B cell (primary cell): ENCODE measurements at regions of chr13 and their contacts with region 1.

Region 1: DNA sequence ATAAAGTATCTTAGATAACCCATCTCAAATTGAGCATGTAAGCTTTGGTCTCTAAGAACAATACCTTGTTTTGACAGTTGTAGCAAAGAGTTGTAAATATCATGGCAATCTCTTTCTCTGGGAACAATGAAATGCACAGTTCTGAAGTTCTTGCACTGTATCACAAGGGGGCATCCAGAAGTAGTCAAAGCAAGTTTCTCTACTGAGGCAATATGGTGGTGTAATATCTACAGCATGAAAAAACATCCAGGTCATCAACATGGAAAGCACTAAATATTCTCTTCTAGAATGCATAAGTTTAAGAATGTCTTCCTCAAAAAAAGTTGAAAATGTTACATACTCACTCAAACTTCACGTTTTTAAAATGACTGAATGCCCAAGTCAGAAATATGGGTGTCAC is 19.6 kb downstream of the MTMR6 start:
- DNase-seq: peak; percentile 38
- ATAC-seq: peak; percentile 63
- H3K4me3 ChIP-seq: no peak overlapping the region
- H3K4me3 Mint-ChIP-seq: no peak overlapping the region
- H3K27ac ChIP-seq: no peak overlapping the region
- H3K27ac Mint-ChIP-seq: peak overlapping the region; percentile 43
- H3K4me1 ChIP-seq: no peaks in the 10 kb centered on the region
- H3K4me1 Mint-ChIP-seq: peaks cover 4% of the 10 kb centered on the region
- H3K27me3 ChIP-seq: no peaks in the 10 kb centered on the region
- H3K27me3 Mint-ChIP-seq: no peaks in the 10 kb centered on the region
- CTCF ChIP-seq: no peak

Region 2: DNA sequence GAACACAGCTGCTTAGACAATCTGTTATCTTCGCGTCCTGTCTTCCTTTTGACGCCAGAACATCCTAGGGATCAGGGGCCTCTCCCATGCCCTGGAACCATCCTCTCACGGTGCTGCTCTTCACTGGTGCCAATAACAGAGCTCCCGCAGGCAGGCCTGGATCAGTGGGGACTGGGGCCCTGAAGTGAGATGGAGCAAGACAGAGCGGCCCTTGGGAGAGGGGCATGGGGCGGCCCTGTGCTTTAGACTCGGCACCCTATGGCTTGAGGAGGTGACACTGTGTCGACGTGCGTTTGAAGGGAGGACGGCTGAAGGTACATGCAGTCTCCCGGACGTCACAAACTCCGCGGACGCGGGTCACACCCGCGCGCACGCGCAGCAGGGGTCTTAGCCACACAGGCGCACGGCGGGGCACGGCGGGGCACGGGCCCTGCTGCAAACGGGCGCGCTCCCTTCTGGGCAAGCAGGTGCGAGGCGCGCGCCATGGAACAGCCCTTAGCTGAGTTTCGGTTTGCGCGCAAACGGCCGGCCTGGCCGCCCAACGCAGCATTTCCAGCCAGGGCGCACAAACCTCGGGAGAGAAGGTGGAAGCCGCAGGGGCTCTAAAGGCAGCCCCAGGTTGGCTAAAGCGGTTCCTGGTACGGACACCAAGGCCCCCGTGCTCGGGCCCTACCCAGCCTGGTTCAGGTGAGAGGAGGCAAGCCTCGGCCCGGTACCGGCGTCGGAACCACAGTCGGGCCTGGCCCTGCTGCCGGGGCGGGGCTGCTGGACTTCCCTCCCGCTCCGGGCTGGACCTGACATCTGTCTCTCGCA is 520.3 kb before region 1 on chr13:
- CTCF ChIA-PET with region 1: no interaction called
- POLR2A ChIA-PET with region 1: no interaction called
- intact Hi-C with region 1: no loop called
- DNase-seq: peak; percentile 19
- ATAC-seq: no peak
- H3K4me3 ChIP-seq: no peak overlapping the region
- H3K4me3 Mint-ChIP-seq: peak overlapping the region; percentile 73
- H3K27ac ChIP-seq: no peak overlapping the region
- H3K27ac Mint-ChIP-seq: no peak overlapping the region
- H3K4me1 ChIP-seq: peaks cover 12 to 14% of the 10 kb centered on the region in 2 donors
- H3K4me1 Mint-ChIP-seq: peaks cover 19% of the 10 kb centered on the region
- H3K27me3 ChIP-seq: peaks cover 0 to 21% (median 8%) of the 10 kb centered on the region in 4 experiments
- H3K27me3 Mint-ChIP-seq: peaks cover 59% of the 10 kb centered on the region
- CTCF ChIP-seq: no peak

Region 3: DNA sequence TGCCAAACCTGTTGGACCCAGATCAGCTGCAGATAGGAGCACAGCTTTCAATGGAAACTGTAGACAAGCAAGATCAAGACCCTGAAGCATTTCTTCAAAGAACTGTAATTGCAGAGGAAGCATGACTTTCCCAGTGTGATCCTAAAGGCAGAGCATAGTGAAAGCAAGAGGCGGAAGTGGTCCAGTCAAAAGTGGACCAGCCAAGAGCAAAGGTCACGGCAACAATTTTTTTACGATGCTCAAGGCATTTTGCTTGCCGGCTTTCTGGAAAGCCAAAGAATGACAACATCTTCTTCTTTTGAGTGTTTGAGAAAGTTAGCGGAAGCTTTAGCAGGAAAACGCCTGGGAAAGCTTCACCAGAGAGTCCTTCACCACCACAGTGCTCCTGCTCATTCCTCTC is 392.2 kb before region 1 on chr13:
- CTCF ChIA-PET with region 1: no interaction called
- POLR2A ChIA-PET with region 1: interaction called, 11 read pairs
- intact Hi-C with region 1: no loop called
- DNase-seq: no peak
- ATAC-seq: no peak
- H3K4me3 ChIP-seq: no peak overlapping the region
- H3K4me3 Mint-ChIP-seq: no peak overlapping the region
- H3K27ac ChIP-seq: no peak overlapping the region
- H3K27ac Mint-ChIP-seq: no peak overlapping the region
- H3K4me1 ChIP-seq: no peaks in the 10 kb centered on the region
- H3K4me1 Mint-ChIP-seq: no peaks in the 10 kb centered on the region
- H3K27me3 ChIP-seq: peaks cover 0 to 4% (median 0%) of the 10 kb centered on the region in 4 experiments
- H3K27me3 Mint-ChIP-seq: peaks cover 30% of the 10 kb centered on the region
- CTCF ChIP-seq: no peak

Region 4: GRCh38 chr13:25253687-25254086 is 14.0 kb before region 1 on chr13:
- CTCF ChIA-PET with region 1: no interaction called
- POLR2A ChIA-PET with region 1: no interaction called
- intact Hi-C with region 1: no loop called
- DNase-seq: no peak
- ATAC-seq: no peak
- H3K4me3 ChIP-seq: no peak overlapping the region
- H3K4me3 Mint-ChIP-seq: no peak overlapping the region
- H3K27ac ChIP-seq: no peak overlapping the region
- H3K27ac Mint-ChIP-seq: no peak overlapping the region
- H3K4me1 ChIP-seq: peaks cover 0 to 4% of the 10 kb centered on the region in 2 donors
- H3K4me1 Mint-ChIP-seq: peaks cover 3% of the 10 kb centered on the region
- H3K27me3 ChIP-seq: no peaks in the 10 kb centered on the region
- H3K27me3 Mint-ChIP-seq: no peaks in the 10 kb centered on the region
- CTCF ChIP-seq: no peak

Region 5: DNA sequence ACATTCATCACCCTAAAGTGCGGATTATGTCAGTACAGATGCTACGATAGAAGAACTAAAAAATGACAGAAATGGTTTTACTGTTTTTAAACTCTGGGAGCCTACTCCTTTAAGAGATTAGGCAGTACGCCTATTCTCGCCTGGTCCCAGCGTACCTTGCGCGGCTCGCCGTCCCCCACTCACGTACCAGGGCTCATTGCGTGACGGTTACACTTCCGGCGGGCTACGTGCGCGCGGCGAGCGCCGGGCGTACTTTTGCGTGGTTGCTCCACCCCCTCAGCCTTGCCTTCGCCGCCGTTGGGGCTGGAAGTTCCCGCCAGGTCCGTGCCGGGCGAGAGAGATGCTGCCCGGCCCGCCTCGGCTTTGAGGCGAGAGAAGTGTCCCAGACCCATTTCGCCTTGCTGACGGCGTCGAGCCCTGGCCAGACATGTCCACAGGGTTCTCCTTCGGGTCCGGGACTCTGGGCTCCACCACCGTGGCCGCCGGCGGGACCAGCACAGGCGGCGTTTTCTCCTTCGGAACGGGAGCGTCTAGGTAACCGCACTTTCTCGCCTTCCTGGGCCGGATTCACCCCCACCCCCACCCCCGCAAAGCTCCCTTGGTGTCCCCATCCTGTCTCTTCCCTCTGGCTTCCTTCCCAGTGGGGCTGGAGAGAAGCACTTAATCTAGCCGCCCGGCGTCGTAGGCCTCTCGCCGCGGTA is 33.8 kb after region 1 on chr13 and contains the start of gene NUP58:
- CTCF ChIA-PET with region 1: interaction called, 3 read pairs
- POLR2A ChIA-PET with region 1: no interaction called
- intact Hi-C with region 1: loop called (anchors 5 kb)
- DNase-seq: peak; percentile 97
- ATAC-seq: peak; percentile 99
- H3K4me3 ChIP-seq: peak within 1 kb of the TSS; percentile 69 to 94 (median 86)
- H3K4me3 Mint-ChIP-seq: peak within 1 kb of the TSS; percentile 87
- H3K27ac ChIP-seq: peak within 1 kb of the TSS; percentile 90 to 97
- H3K27ac Mint-ChIP-seq: peak within 1 kb of the TSS; percentile 95
- H3K4me1 ChIP-seq: peaks cover 13 to 17% of the 10 kb centered on the region in 2 donors
- H3K4me1 Mint-ChIP-seq: peaks cover 33% of the 10 kb centered on the region
- H3K27me3 ChIP-seq: peaks cover 0 to 20% (median 15%) of the 10 kb centered on the region in 4 experiments
- H3K27me3 Mint-ChIP-seq: peaks cover 17% of the 10 kb centered on the region
- CTCF ChIP-seq: no peak
- total RNA-seq, gene NUP58: 41.0 and 41.7 TPM in 2 replicates